H1 (cell line): ENCODE measurements at regions of chr2 and their contacts with region 1.

Region 1: DNA sequence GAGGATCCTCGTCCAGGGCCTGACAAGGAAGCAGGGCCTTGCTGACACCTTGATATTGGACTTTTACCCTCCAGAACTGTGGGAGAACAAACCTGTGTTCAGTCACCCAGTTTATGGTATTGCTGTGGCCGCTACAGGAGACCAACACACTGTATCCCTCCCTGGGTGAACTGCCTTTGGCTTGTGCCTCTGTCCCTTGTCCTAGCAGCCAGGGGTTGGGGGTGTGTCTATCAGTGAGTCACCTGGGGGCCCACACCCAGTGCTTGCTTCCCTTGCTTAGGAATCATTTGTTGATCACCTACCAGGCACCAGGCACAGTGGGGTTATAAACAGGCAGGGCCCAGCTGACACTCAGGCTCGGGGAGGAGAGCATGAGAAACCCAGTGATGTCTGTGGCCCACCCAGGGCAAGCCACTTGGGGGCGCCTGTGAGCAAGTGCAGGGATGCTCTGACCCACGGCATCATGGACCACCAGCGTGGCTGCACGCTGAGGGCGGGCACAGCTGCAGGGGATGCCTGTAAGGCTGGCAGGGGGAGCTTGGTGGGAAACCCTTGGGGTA is 17.1 kb downstream of the TMEM185B start:
- DNase-seq: peak in 1 of 2 experiments; percentile 93
- H3K4me3 ChIP-seq: no peak overlapping the region
- H3K27ac ChIP-seq: no peak overlapping the region
- H3K4me1 ChIP-seq: no peaks in the 10 kb centered on the region; a peak in 1 of 7 replicates
- H3K27me3 ChIP-seq: no peaks in the 10 kb centered on the region; a peak in 1 of 7 replicates
- CTCF ChIP-seq: peak; percentile 90 to 96 (median 92)
- EP300 ChIP-seq: no peak
- POLR2A ChIP-seq: no peak
- RAD21 ChIP-seq: peak; percentile 75 to 86

Region 2: GRCh38 chr2:120219766-120220165 is 13.7 kb after region 1 on chr2:
- CTCF ChIA-PET with region 1: interaction called, 32 read pairs
- POLR2A ChIA-PET with region 1: no interaction called
- DNase-seq: no peak
- H3K4me3 ChIP-seq: no peak overlapping the region
- H3K27ac ChIP-seq: no peak overlapping the region
- H3K4me1 ChIP-seq: peaks cover 0 to 7% (median 6%) of the 10 kb centered on the region in 4 experiments; a peak in 5 of 7 replicates
- H3K27me3 ChIP-seq: peaks cover 13 to 27% (median 25%) of the 10 kb centered on the region in 4 experiments
- CTCF ChIP-seq: no peak
- EP300 ChIP-seq: no peak
- POLR2A ChIP-seq: no peak
- RAD21 ChIP-seq: no peak

Region 3: GRCh38 chr2:120305296-120305695 is 99.2 kb after region 1 on chr2:
- CTCF ChIA-PET with region 1: interaction called, 11 read pairs
- POLR2A ChIA-PET with region 1: no interaction called
- DNase-seq: no peak
- H3K4me3 ChIP-seq: no peak overlapping the region
- H3K27ac ChIP-seq: no peak overlapping the region
- H3K4me1 ChIP-seq: peaks cover 0 to 3% (median 0%) of the 10 kb centered on the region in 4 experiments; a peak in 3 of 7 replicates
- H3K27me3 ChIP-seq: peaks cover 0 to 8% (median 2%) of the 10 kb centered on the region in 4 experiments; a peak in 2 of 7 replicates
- CTCF ChIP-seq: peak; percentile 34 to 43 (median 36)
- EP300 ChIP-seq: no peak
- POLR2A ChIP-seq: no peak
- RAD21 ChIP-seq: peak; percentile 39 to 56; a peak in 3 of 4 replicates